ENCODE measurements at regions of chr15 and their contacts with region 1.

Region 1: GRCh38 chr15:34367101-34368081 is at the start of gene LPCAT4:
- DNase-seq: peak; percentile 87

Region 2: DNA sequence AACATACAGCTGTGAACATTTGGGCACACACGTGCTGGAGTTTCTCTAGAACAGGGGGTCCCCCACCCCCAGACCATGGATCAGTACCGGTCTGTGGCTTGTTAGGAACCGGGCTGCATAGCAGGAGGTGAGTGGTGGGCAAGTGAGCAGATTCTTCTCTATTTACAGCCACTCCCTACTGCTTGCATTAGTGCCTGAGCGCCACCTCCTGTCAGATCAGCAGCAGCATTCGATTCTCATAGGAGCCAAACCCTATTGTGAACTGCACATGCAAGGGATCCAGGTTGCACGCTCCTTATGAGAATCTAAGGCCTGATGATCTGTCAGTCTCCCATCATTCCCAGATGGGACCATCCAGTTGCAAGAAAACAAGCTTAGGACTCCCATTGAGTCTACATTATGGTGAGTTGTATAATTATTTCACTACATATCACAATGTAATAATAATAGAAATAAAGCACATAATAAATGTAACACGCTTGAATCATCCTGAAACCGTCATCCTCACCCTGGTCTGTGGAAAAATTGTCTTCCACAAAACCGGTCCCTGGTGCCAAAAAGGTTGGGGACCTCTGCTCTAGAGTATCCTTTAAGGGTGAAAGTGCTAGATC is 373.3 kb before region 1 on chr15:
- CTCF ChIA-PET with region 1: no interaction called
- POLR2A ChIA-PET with region 1: no interaction called
- DNase-seq: no peak

Region 3: GRCh38 chr15:34342737-34343575 is 24.4 kb before region 1 on chr15 and contains the starts of genes NOP10 and NUTM1:
- CTCF ChIA-PET with region 1: interaction called, 3 read pairs
- POLR2A ChIA-PET with region 1: interaction called, 17 read pairs
- DNase-seq: peak; percentile 71

Region 4: GRCh38 chr15:34456658-34457057 is 89.3 kb after region 1 on chr15:
- CTCF ChIA-PET with region 1: no interaction called
- POLR2A ChIA-PET with region 1: no interaction called
- DNase-seq: no peak